Right ventricle myocardium inferior (tissue), 1 donor: ENCODE measurements at regions of chr17 and their contacts with region 1.

Region 1: GRCh38 chr17:14211801-14212200 is 24.9 kb downstream of the CDRT15 start:
- DNase-seq: no peak
- ATAC-seq: no peak

Region 2: DNA sequence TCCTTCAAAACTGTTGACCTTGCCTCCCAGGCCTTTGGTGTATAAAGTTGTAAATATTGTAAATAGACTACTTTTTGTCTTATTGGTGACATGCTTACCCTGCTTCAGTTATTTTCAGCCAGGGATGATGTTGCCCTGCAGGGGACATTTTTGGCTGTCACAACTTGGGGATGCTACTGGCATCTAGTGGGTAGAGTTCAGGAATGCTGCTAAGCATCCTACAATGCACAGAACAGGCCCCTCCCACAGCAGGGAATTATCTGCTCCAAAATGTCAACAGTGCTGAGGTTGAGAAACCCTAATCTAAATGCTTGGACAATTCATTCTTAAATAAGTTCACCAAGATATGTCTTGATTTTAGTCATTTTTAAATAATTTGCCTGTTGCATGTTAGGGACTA is 593.5 kb after region 1 on chr17:
- intact Hi-C with region 1: loop called (anchors 10 kb)
- DNase-seq: no peak
- ATAC-seq: no peak